Activated T-helper 1 cell treated with anti-CD3 and anti-CD28 coated beads, Interleukin-12 subunit alpha, Interleukin-12 subunit beta, Interleukin-2, Interleukin-4 antibody, amounts not matched to agents 30 ng/mL and 10 ng/mL and 1 ng/mL, durations not matched to agents 14 hours and 24 hours and 36 hours (primary cell): ENCODE measurements at regions of chr3 and their contacts with region 1.

Region 1: DNA sequence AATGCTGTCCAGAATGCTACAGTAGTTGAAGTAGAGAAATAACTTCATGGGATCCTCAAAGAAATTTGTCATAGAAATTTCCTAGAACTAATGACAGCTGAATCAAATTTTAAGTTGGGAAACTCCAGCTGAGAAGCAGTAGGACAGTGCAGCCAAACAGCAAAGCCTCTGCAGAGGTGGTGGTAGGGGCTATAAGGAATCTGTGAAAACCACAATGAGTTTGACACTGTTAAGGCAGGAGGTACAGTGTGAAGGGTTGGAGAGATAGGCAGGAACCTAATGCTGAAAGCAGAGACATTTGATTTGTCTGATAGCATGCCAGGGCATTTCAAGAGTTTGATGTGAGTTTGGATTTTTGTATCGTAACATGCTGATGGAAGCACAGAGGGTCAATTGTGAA is 22.0 kb downstream of the ASTE1 start:
- DNase-seq: no peak
- H3K4me3 Mint-ChIP-seq: no peak overlapping the region
- H3K27ac Mint-ChIP-seq: peak overlapping the region; percentile 21
- H3K4me1 Mint-ChIP-seq: peaks cover 29% of the 10 kb centered on the region
- H3K27me3 Mint-ChIP-seq: no peaks in the 10 kb centered on the region

Region 2: GRCh38 chr3:130925628-130926027 is 79.0 kb before region 1 on chr3:
- intact Hi-C with region 1: no loop called
- DNase-seq: no peak
- H3K4me3 Mint-ChIP-seq: no peak overlapping the region
- H3K27ac Mint-ChIP-seq: no peak overlapping the region
- H3K4me1 Mint-ChIP-seq: peaks cover 38% of the 10 kb centered on the region
- H3K27me3 Mint-ChIP-seq: no peaks in the 10 kb centered on the region

Region 3: GRCh38 chr3:131018970-131019369 is 14.4 kb after region 1 on chr3:
- intact Hi-C with region 1: loop called (anchors 2 kb)
- DNase-seq: no peak
- H3K4me3 Mint-ChIP-seq: no peak overlapping the region
- H3K27ac Mint-ChIP-seq: no peak overlapping the region
- H3K4me1 Mint-ChIP-seq: peaks cover 38% of the 10 kb centered on the region
- H3K27me3 Mint-ChIP-seq: no peaks in the 10 kb centered on the region

Region 4: DNA sequence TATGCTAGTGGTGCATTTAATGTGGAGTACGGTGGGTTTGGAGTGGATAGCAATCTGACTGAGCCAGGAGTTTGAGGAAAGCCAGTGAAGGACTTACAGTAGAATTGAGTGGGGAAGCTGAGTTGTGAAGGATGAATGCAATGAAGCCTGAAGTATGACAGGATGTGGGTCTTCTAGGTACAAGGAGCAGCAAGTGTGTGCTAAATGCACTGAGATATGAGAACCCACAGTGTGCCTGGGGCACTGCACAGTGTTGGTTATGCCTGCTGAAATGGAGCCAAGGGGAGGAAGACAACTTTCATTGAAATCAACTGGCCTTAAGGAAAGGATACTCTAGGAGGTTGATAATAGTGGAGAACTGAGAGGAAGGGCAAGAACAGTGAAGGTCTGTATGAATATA is 603.7 kb after region 1 on chr3:
- intact Hi-C with region 1: no loop called
- DNase-seq: no peak
- H3K4me3 Mint-ChIP-seq: no peak overlapping the region
- H3K27ac Mint-ChIP-seq: no peak overlapping the region
- H3K4me1 Mint-ChIP-seq: no peaks in the 10 kb centered on the region
- H3K27me3 Mint-ChIP-seq: peaks cover 6% of the 10 kb centered on the region

Region 5: DNA sequence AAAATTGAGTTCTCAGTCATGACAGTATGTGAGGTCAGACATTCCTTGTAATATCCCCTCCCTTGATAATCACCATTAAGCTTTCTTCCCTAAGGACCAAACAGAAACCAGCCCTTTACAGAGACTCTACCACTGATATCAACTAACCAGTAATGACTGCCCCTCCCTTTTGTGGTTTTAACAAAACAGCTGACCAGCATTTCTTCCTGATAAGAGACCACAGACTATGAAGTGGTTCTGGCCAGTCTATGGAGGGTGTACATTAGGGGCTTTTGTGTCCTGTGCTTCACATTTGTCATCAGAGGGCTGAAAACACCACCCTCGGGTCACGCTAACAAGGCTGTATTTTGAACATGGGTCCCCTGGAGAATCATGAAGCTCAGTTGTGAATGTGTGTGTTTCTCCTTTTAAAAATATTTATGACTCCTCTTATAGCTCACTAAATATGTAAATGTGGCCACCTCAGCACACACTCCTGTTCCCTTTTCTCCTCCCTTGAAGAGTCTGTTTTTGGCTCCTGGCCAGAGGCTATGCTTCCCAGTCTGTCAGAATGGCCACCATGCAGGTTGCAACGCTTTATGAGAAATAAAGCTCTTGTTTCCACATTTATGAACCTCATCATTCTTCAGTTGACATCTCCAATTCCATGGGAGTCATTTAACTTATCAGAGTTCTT is 790.9 kb after region 1 on chr3:
- intact Hi-C with region 1: no loop called
- DNase-seq: no peak
- H3K4me3 Mint-ChIP-seq: no peak overlapping the region
- H3K27ac Mint-ChIP-seq: no peak overlapping the region
- H3K4me1 Mint-ChIP-seq: peaks cover 10% of the 10 kb centered on the region
- H3K27me3 Mint-ChIP-seq: no peaks in the 10 kb centered on the region